T-cell (primary cell): ENCODE measurements at regions of chr3 and their contacts with region 1.

Region 1: DNA sequence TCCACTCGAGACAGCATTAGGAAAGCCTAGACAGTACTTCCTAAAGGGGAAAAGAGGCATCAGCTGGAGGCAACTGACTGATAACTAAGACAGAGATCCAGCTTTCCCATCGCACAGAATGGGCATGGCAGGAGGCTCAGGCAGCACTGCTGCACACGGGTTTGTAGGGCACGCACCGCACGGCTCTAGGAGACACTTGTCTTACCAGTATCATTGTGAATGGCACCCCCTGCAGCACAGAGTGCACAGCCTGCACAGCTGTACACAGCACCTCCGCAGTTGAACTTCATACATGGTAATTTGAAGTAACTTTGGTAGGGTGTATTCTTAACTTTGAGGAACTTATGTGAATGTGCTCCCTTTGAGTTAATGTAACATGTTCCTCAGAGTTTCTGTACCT is 281.6 kb downstream of the PLCL2 start:
- DNase-seq: peak in 5 of 35 experiments; percentile 6 to 17 (median 14)
- ATAC-seq: peak in 2 of 4 experiments; percentile 41 to 62
- H3K4me3 ChIP-seq: no peak overlapping the region
- H3K4me3 Mint-ChIP-seq: no peak overlapping the region
- H3K27ac ChIP-seq: no peak overlapping the region
- H3K27ac Mint-ChIP-seq: no peak overlapping the region
- H3K4me1 ChIP-seq: no peaks in the 10 kb centered on the region
- H3K4me1 Mint-ChIP-seq: no peaks in the 10 kb centered on the region
- H3K27me3 ChIP-seq: no peaks in the 10 kb centered on the region
- H3K27me3 Mint-ChIP-seq: no peaks in the 10 kb centered on the region

Region 2: DNA sequence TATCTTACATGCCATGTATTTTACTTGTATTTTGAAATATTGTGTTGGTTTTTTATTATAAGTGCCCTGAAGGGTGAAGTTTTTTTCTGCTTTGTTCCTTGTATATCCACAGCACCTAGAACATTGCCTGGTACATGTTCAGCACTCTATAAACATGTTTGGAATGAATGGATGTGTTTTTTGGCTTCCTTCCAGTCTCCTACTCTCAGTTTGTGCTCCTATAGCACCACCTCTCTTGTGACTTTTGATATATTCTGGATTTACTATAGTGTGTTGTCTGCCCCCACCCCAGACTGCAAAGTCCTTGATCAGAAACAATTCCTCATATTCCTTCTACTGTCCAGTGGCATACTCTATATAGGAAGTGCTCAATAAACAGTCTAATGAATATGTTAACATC is 221.0 kb before region 1 on chr3:
- CTCF ChIA-PET with region 1: no interaction called
- POLR2A ChIA-PET with region 1: no interaction called
- DNase-seq: no peak
- ATAC-seq: no peak
- H3K4me3 ChIP-seq: no peak overlapping the region
- H3K4me3 Mint-ChIP-seq: no peak overlapping the region
- H3K27ac ChIP-seq: no peak overlapping the region
- H3K27ac Mint-ChIP-seq: no peak overlapping the region
- H3K4me1 ChIP-seq: peaks cover 19 to 20% of the 10 kb centered on the region in 2 experiments
- H3K4me1 Mint-ChIP-seq: peaks cover 76 to 82% (median 80%) of the 10 kb centered on the region in 3 donors
- H3K27me3 ChIP-seq: no peaks in the 10 kb centered on the region
- H3K27me3 Mint-ChIP-seq: no peaks in the 10 kb centered on the region

Region 3: GRCh38 chr3:17032407-17033034 is 133.8 kb before region 1 on chr3:
- CTCF ChIA-PET with region 1: no interaction called
- POLR2A ChIA-PET with region 1: no interaction called
- DNase-seq: no peak
- ATAC-seq: peak in 1 of 4 experiments; percentile 48
- H3K4me3 ChIP-seq: no peak overlapping the region
- H3K4me3 Mint-ChIP-seq: no peak overlapping the region
- H3K27ac ChIP-seq: no peak overlapping the region
- H3K27ac Mint-ChIP-seq: peak overlapping the region in 1 of 2 donors; percentile 5
- H3K4me1 ChIP-seq: peaks cover 11 to 12% of the 10 kb centered on the region in 2 experiments
- H3K4me1 Mint-ChIP-seq: peaks cover 78 to 90% (median 88%) of the 10 kb centered on the region in 3 donors
- H3K27me3 ChIP-seq: no peaks in the 10 kb centered on the region
- H3K27me3 Mint-ChIP-seq: no peaks in the 10 kb centered on the region

Region 4: GRCh38 chr3:17181413-17181907 is 15.1 kb after region 1 on chr3:
- CTCF ChIA-PET with region 1: interaction called in 1 of 2 experiments, 12 read pairs
- POLR2A ChIA-PET with region 1: no interaction called
- DNase-seq: no peak
- ATAC-seq: no peak
- H3K4me3 ChIP-seq: no peak overlapping the region
- H3K4me3 Mint-ChIP-seq: no peak overlapping the region
- H3K27ac ChIP-seq: no peak overlapping the region
- H3K27ac Mint-ChIP-seq: no peak overlapping the region
- H3K4me1 ChIP-seq: peaks cover 6 to 11% of the 10 kb centered on the region in 2 experiments
- H3K4me1 Mint-ChIP-seq: peaks cover 10 to 33% (median 25%) of the 10 kb centered on the region in 3 donors
- H3K27me3 ChIP-seq: no peaks in the 10 kb centered on the region
- H3K27me3 Mint-ChIP-seq: no peaks in the 10 kb centered on the region